Heart right ventricle (tissue), 16 donors: ENCODE measurements at regions of chr3 and their contacts with region 1.

Region 1: DNA sequence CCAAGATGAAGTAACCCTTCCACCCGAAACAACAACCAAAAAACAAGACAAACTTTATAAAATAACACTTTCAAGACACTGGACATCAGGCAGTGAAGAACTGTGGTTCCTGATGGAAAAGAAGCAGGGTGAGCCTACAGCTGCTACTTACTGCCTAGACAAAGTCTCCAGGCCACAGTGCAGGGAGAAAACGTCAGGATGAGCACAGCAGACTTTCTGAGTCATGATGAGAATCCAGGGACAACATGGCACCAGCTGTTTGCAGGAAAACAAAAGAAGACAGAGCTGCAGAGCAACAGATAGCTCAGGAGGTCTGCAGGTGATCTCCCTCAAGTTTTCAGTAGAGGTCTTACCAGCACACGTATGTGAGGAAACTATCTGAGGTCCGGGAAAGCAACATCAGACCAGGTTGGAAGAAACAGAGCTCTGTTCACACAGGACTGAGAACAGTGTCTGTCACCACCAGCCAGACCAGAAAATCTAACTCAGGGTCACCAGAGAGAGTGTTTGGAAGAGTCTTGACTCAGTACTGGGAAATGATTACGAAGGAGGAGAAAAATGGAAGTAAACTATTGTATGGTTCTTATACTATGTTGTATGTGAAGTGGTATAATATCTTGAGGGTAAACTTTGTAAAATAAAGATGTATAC is 108.9 kb downstream of the ANO10 start:
- DNase-seq: no peak
- ATAC-seq: no peak
- H3K4me3 ChIP-seq: no peak overlapping the region
- H3K27ac ChIP-seq: no peak overlapping the region
- H3K4me1 ChIP-seq: no peaks in the 10 kb centered on the region
- H3K27me3 ChIP-seq: no peaks in the 10 kb centered on the region
- CTCF ChIP-seq: no peak

Region 2: DNA sequence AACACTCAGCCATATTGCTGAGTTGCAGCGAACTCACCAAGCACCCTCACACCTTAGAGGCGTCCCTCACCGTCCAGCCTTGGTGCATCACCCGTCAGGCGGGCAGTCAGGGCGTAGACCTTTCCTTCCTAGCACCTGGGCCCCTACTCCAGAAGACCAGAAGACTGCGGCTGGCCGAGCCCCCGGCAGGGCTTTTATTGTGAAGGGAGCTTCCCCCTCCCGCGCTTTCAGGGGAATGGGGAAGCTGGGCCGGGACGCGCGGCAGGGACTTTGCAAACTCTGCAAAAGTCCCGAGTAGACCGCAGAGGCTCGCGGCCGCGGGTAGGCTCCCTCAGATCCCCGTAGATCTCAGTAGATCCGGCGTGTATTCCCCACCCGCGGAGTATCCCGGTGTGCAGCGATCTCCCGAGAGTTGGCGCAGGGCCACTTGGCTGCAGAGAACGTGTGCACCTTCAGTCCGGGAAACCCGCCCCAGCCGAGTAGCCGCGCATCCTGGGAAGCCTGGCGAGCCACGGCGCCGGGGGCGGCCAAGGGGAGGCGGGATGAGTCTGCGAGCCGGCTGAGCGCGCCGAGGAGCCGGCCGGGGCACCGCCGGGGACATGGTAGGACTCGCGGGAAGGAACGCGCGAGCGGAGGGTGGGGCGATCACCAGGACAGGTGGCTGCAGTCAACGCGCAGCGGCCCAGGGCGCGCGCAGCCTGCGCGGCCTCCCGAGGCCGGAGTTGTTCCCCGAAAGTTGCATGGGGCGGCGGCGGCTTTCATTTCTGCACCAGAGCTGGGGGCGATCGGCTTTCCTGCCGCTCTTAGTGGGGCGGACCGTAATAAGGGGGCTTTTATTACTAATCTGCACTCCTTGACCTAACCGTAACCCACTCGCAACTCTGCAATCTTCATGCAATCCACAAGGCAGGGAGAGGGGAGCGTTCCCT is 533.6 kb before region 1 on chr3 and contains the start of gene GASK1A:
- intact Hi-C with region 1: loop called in 1 of 10 experiments (anchors 10 kb)
- DNase-seq: peak; percentile 19 to 52
- ATAC-seq: peak; percentile 75 to 87 (median 82)
- H3K4me3 ChIP-seq: peak within 1 kb of the TSS; percentile 19 to 71 (median 66)
- H3K27ac ChIP-seq: peak within 1 kb of the TSS in 1 of 10 donors; percentile 19
- H3K4me1 ChIP-seq: peaks cover 4 to 24% (median 10%) of the 10 kb centered on the region in 9 donors
- H3K27me3 ChIP-seq: peaks cover 3 to 45% (median 32%) of the 10 kb centered on the region in 7 donors
- CTCF ChIP-seq: no peak
- total RNA-seq, gene GASK1A: 0.28 to 1.5 (median 0.66) TPM

Region 3: DNA sequence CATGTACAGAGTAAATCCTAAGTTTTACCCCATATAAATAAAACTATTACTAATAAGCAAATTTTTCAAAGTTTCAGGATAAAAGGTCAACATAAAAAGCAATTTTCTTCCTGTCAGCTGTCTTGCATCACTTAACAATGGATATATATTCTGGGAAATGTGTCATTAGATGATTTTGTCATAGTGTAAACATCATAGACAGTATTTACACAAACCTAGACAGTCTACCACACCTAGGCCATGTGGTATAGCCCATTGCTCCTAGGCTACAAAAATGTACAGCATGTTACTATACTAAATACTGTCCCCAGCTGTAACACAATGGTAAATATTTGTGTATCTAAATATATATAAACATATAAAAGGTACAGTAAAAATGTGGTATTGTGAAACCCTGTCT is 47.8 kb before region 1 on chr3:
- intact Hi-C with region 1: no loop called
- DNase-seq: no peak
- ATAC-seq: no peak
- H3K4me3 ChIP-seq: no peak overlapping the region
- H3K27ac ChIP-seq: no peak overlapping the region
- H3K4me1 ChIP-seq: peaks cover 0 to 11% (median 4%) of the 10 kb centered on the region in 9 donors
- H3K27me3 ChIP-seq: no peaks in the 10 kb centered on the region
- CTCF ChIP-seq: no peak